CD8-positive, alpha-beta T cell (primary cell): ENCODE measurements at regions of chr14 and their contacts with region 1.

Region 1: DNA sequence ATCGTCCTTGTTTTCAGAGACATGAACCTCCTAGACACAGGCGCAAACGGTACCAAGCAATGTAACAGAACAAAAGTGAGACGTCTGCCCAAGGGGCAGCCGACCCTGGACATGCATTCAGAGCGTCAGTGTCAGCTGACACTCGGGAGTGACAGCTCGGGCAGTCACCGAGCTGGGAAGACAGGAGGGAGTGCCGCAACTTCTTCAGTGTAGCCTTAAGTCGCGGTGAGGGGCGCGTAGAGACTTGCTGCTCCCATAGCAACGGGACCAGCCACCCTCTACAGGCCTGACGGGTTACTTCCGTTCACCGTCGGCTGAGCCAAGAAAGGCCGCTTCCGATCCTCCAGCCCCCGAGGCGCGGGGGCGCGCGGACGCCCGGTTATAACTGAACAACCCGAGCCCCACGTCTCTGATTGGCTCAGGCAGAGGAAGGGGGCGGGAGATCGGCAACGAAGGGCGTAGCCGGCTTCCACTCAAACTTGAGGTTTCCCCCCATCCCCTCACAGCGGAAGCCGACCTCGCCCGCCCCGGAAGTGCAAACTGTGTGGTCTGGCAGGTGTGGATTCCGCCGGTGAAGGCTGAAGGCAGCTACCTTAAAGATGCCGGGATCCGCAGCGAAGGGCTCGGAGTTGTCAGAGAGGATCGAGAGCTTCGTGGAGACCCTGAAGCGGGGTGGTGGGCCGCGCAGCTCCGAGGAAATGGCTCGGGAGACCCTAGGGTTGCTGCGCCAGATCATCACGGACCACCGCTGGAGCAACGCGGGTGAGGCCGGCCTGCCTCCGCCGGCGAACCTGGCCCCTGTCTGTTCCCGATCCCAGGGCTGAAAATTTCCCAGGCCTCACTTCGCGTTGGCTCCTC is at the start of gene EIF2B2:
- DNase-seq: peak; percentile 98 to 99 (median 99)
- ATAC-seq: peak; percentile 96
- H3K4me3 ChIP-seq: peak within 1 kb of the TSS; percentile 81 to 94
- H3K4me3 Mint-ChIP-seq: peak within 1 kb of the TSS; percentile 97
- H3K27ac ChIP-seq: peak within 1 kb of the TSS; percentile 91 to 93
- H3K27ac Mint-ChIP-seq: peak within 1 kb of the TSS; percentile 97
- H3K4me1 ChIP-seq: peaks cover 19% of the 10 kb centered on the region
- H3K4me1 Mint-ChIP-seq: peaks cover 43% of the 10 kb centered on the region
- H3K27me3 ChIP-seq: no peaks in the 10 kb centered on the region
- H3K27me3 Mint-ChIP-seq: no peaks in the 10 kb centered on the region
- CTCF ChIP-seq: no peak
- total RNA-seq, gene EIF2B2: 19.8 to 20.6 TPM

Region 2: GRCh38 chr14:74493343-74494261 is 509.0 kb before region 1 on chr14 and contains the start of gene ISCA2:
- CTCF ChIA-PET with region 1: no interaction called
- POLR2A ChIA-PET with region 1: no interaction called
- intact Hi-C with region 1: loop called in 1 of 2 experiments (anchors 2 kb)
- DNase-seq: peak; percentile 97 to 100 (median 99)
- ATAC-seq: peak; percentile 91
- H3K4me3 ChIP-seq: peak within 1 kb of the TSS; percentile 78 to 90
- H3K4me3 Mint-ChIP-seq: no peak within 1 kb of the TSS
- H3K27ac ChIP-seq: peak within 1 kb of the TSS; percentile 80 to 81
- H3K27ac Mint-ChIP-seq: peak within 1 kb of the TSS; percentile 92
- H3K4me1 ChIP-seq: peaks cover 32% of the 10 kb centered on the region
- H3K4me1 Mint-ChIP-seq: peaks cover 33% of the 10 kb centered on the region
- H3K27me3 ChIP-seq: no peaks in the 10 kb centered on the region
- H3K27me3 Mint-ChIP-seq: no peaks in the 10 kb centered on the region
- CTCF ChIP-seq: no peak
- total RNA-seq, gene ISCA2: 18.6 to 24.0 TPM

Region 3: DNA sequence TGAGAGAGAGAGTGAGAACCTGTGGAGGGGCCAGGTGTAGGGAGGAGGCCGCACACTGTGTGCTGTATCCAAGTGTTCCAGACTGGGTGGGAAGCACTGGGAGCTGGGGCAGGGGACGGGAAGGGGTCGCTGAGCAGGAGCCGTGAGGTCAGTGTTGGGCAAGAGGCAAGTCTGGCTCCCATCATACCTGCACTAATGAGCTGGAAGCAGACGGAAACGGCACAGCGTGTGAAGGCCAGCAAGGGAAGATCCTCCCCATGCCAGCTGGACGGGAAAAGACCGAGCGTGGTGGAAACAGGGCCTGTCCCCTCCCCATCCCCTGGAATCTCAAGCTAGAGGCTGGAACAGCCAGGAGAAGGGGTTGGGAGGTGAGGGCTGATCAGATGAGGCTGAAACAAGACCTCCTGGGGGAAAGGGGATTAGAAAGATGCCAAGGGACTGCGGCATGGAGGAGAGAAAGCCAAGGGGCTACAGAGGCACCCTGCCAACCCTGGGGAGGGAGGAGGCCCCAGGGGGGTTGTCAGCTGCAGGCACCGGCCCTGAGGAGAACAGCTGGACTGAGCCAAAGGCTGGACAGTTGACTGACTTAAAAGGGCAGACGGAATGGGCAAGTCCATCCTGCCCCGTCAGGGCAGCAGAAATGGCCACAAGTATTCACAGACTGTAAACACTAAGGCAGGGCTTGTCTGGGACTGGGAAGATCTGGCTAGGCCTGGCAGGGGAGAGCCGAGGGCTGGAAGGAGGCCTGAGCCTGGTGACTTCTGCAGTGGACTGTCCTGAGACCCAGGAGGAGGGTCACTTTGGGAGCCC is 371.5 kb before region 1 on chr14:
- CTCF ChIA-PET with region 1: no interaction called
- POLR2A ChIA-PET with region 1: no interaction called
- intact Hi-C with region 1: no loop called
- DNase-seq: no peak
- ATAC-seq: no peak
- H3K4me3 ChIP-seq: no peak overlapping the region
- H3K4me3 Mint-ChIP-seq: no peak overlapping the region
- H3K27ac ChIP-seq: no peak overlapping the region
- H3K27ac Mint-ChIP-seq: no peak overlapping the region
- H3K4me1 ChIP-seq: no peaks in the 10 kb centered on the region
- H3K4me1 Mint-ChIP-seq: peaks cover 3% of the 10 kb centered on the region
- H3K27me3 ChIP-seq: no peaks in the 10 kb centered on the region
- H3K27me3 Mint-ChIP-seq: no peaks in the 10 kb centered on the region
- CTCF ChIP-seq: no peak

Region 4: GRCh38 chr14:74881431-74882361 is 120.9 kb before region 1 on chr14 and contains the start of gene DLST:
- CTCF ChIA-PET with region 1: no interaction called
- POLR2A ChIA-PET with region 1: no interaction called
- intact Hi-C with region 1: loop called in 1 of 2 experiments (anchors 1 kb)
- DNase-seq: peak; percentile 74 to 92 (median 85)
- ATAC-seq: peak; percentile 76
- H3K4me3 ChIP-seq: peak within 1 kb of the TSS; percentile 62 to 80
- H3K4me3 Mint-ChIP-seq: peak within 1 kb of the TSS; percentile 99
- H3K27ac ChIP-seq: peak within 1 kb of the TSS; percentile 82 to 90
- H3K27ac Mint-ChIP-seq: peak within 1 kb of the TSS; percentile 100
- H3K4me1 ChIP-seq: peaks cover 44% of the 10 kb centered on the region
- H3K4me1 Mint-ChIP-seq: peaks cover 62% of the 10 kb centered on the region
- H3K27me3 ChIP-seq: no peaks in the 10 kb centered on the region
- H3K27me3 Mint-ChIP-seq: no peaks in the 10 kb centered on the region
- CTCF ChIP-seq: no peak
- total RNA-seq, gene DLST: 142 to 156 TPM

Region 5: DNA sequence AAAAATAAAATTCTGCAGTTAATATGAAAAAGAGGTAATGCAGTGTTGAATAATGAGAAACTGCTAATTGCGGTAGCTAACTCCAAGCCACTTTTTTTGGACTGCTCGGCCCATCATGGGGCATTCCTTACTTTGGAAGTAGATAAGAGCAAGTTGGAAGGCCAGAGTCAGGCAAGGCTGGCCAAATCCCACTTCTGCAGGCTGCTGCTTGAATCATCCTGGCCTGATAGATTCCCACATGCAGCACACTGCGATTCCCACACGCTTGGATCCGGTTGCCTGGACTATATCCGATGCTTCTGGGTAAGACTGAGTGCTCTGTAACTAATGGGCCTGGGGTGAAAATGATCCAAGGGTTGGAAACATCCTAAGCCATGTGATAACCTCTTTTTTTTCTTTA is 10.7 kb after region 1 on chr14:
- CTCF ChIA-PET with region 1: no interaction called
- POLR2A ChIA-PET with region 1: interaction called, 10 read pairs
- intact Hi-C with region 1: no loop called
- DNase-seq: no peak
- ATAC-seq: no peak
- H3K4me3 ChIP-seq: no peak overlapping the region
- H3K4me3 Mint-ChIP-seq: no peak overlapping the region
- H3K27ac ChIP-seq: no peak overlapping the region
- H3K27ac Mint-ChIP-seq: no peak overlapping the region
- H3K4me1 ChIP-seq: peaks cover 3% of the 10 kb centered on the region
- H3K4me1 Mint-ChIP-seq: peaks cover 12% of the 10 kb centered on the region
- H3K27me3 ChIP-seq: no peaks in the 10 kb centered on the region
- H3K27me3 Mint-ChIP-seq: no peaks in the 10 kb centered on the region
- CTCF ChIP-seq: no peak

Region 6: GRCh38 chr14:75126679-75127473 is 124.3 kb after region 1 on chr14 and contains the start of gene NEK9:
- CTCF ChIA-PET with region 1: no interaction called
- POLR2A ChIA-PET with region 1: interaction called, 3 read pairs
- intact Hi-C with region 1: loop called in 1 of 2 experiments (anchors 1 kb)
- DNase-seq: peak; percentile 77 to 93 (median 89)
- ATAC-seq: peak; percentile 82
- H3K4me3 ChIP-seq: peak within 1 kb of the TSS; percentile 87 to 95
- H3K4me3 Mint-ChIP-seq: peak within 1 kb of the TSS; percentile 95
- H3K27ac ChIP-seq: peak within 1 kb of the TSS; percentile 87 to 92
- H3K27ac Mint-ChIP-seq: peak within 1 kb of the TSS; percentile 98
- H3K4me1 ChIP-seq: peaks cover 23% of the 10 kb centered on the region
- H3K4me1 Mint-ChIP-seq: peaks cover 46% of the 10 kb centered on the region
- H3K27me3 ChIP-seq: no peaks in the 10 kb centered on the region
- H3K27me3 Mint-ChIP-seq: no peaks in the 10 kb centered on the region
- CTCF ChIP-seq: no peak
- total RNA-seq, gene NEK9: 40.7 to 42.9 TPM

Region 7: DNA sequence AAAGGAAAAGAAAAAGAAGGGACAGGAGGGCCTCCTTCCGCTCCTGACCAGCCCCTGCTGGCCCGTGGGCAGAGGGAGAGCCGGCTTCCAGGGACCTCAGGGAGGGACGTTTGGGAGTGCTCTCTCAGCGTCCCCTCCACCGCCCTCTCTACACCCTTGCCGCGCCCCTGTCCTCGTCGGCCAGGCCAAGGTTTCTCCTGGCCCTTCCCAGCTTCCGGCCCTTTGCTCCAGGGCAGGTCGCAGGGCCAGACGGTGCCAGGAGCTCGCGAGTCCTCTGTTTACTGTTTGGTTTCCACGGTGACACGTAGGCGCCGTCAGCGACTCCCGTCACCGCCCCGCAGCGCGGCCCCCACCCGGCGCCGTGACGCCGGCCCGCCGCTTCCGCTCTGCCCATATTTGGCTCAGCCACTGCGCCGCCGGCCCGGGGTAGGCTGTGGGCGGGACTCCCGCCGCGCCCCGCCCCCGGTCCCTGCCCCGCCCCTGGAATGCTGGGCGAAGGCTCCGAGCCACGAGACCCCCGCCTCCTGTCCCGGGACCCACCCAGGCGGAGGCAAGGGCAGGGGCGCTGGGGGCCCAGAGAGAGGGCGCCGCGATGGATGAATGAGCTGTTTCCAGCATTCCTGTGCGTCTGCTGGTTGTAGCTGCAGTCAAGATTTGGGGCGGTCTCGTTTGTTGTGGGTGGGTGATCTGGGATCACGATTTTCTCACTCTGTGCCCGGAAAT is 291.5 kb after region 1 on chr14:
- CTCF ChIA-PET with region 1: no interaction called
- POLR2A ChIA-PET with region 1: no interaction called
- intact Hi-C with region 1: loop called in 1 of 2 experiments (anchors 2 kb)
- DNase-seq: peak; percentile 90 to 99 (median 94)
- ATAC-seq: peak; percentile 87
- H3K4me3 ChIP-seq: peak overlapping the region; percentile 31 to 62
- H3K4me3 Mint-ChIP-seq: peak overlapping the region; percentile 88
- H3K27ac ChIP-seq: peak overlapping the region; percentile 95 to 99
- H3K27ac Mint-ChIP-seq: peak overlapping the region; percentile 93
- H3K4me1 ChIP-seq: peaks cover 23% of the 10 kb centered on the region
- H3K4me1 Mint-ChIP-seq: peaks cover 23% of the 10 kb centered on the region
- H3K27me3 ChIP-seq: peaks cover 0 to 2% of the 10 kb centered on the region in 2 experiments
- H3K27me3 Mint-ChIP-seq: no peaks in the 10 kb centered on the region
- CTCF ChIP-seq: no peak